ENCODE measurements at regions of chr15 and their contacts with region 1.

Region 1: DNA sequence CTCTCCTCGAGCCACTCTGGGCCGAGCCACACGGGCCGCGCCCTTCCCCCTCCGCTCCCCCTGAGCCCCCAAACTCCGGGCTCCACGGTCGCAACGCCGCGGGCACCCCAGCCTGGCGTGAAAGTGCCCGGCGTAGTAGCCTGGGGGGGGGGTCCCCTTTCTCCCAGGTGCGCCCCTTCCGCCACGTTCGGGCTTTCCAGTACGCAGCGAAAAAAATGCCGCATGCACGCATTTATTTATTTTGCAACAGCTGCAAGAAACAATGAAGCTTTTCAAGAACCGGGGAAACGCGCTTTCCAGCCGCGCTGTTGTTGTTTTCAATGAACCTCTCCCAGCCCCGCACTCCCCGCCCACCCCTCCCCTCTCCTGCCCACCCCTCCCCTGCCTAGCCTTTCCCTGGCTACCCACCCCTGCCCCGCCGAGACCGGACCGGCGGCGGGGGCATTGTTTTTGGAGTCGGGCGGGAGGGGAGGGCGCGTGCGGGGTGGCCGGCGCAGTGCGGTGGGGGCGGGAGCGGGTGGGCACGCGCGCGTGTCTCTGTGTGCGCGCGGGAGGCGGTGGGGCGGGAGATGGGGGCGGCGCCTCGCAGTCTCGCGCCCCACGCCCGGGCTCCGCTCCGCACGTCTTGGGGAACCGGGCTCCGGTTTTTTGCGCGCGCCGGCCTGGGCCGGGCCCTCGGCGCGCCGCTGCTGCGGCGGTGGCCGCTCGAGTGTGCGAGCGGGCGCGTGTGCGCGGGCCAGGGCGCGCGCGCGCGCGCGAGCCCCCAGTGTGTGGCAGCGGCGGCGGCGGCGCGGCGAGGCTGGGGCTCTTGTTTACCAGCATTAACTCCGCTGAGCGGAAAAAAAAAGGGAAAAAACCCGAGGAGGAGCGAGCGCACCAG is at the start of gene IGF1R:
- H3K4me3 ChIP-seq: peak within 1 kb of the TSS; percentile 91
- H3K27ac ChIP-seq: peak within 1 kb of the TSS; percentile 96
- H3K4me1 ChIP-seq: peaks cover 14% of the 10 kb centered on the region
- CTCF ChIP-seq: no peak

Region 2: DNA sequence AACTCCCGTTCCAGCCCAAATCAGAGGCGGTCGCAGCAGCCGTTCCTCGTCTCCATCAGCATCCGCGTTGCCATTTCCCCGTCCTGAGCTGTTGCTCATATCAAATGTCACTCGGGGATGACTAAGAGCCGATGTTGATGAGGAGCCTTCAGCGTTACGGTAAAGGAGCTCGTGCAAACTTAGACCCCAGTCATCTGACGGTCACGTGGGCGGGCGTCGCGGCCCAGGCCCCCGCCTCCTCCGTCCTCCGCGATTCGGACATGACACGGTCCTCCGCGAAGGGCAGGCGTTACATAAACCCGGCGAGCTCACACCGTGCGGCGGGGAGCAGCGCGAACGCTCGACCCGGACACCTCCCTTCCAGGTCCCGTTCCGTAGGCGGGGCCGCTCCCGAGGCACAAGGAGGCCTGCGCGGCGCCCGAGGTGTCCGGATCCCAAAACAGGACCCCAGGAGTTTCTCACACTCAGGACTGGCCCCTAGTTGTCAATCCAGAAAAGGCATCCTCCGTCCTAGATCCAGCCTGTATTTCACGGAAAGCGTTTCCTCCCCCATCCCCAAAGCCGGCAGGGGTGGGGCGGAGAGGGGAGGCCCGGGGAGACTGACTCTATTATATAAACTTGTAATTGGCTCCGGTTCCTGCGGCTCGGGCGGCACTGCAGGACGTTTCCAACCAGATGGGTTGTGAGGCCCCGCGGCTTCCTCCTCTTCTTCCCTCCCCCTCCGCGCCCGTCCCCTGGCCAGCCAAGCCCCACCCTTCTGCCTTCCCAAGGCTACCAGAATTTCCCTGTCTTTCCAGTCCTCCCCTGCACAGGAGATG is 99.7 kb before region 1 on chr15:
- CTCF ChIA-PET with region 1: interaction called, 3 read pairs
- POLR2A ChIA-PET with region 1: interaction called, 16 read pairs
- H3K4me3 ChIP-seq: peak overlapping the region; percentile 59
- H3K27ac ChIP-seq: peak overlapping the region; percentile 78
- H3K4me1 ChIP-seq: peaks cover 9% of the 10 kb centered on the region
- CTCF ChIP-seq: peak; percentile 63; the same call in 1 of the 2 replicates

Region 3: GRCh38 chr15:98610991-98611390 is 37.0 kb before region 1 on chr15:
- CTCF ChIA-PET with region 1: no interaction called
- POLR2A ChIA-PET with region 1: no interaction called
- H3K4me3 ChIP-seq: no peak overlapping the region
- H3K27ac ChIP-seq: no peak overlapping the region
- H3K4me1 ChIP-seq: no peaks in the 10 kb centered on the region
- CTCF ChIP-seq: no peak

Region 4: DNA sequence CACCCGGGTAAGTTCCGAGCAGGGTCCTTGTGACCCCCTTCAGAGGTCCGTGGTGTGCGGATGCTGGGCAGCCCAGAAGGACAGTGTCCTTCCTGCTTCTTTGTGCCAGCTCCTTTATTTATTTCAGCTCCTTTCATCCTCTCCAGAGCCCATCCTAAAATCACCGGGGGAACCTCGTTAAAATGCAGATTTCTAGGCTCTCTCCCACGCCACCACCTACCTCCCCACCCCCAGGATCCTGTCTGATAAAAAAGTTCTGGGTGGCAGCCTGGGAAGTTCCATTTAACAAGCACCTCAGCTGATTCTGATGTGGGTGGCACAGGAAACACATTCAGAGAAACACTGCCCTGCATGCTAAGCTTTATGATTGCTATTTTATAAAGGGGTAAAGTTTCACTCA is 12.2 kb before region 1 on chr15:
- CTCF ChIA-PET with region 1: interaction called, 10 read pairs
- POLR2A ChIA-PET with region 1: interaction called, 6 read pairs
- H3K4me3 ChIP-seq: no peak overlapping the region
- H3K27ac ChIP-seq: no peak overlapping the region
- H3K4me1 ChIP-seq: no peaks in the 10 kb centered on the region; the same call in 1 of the 2 replicates
- CTCF ChIP-seq: no peak

Region 5: GRCh38 chr15:98658831-98659699 is 11.1 kb after region 1 on chr15:
- CTCF ChIA-PET with region 1: interaction called, 31 read pairs
- POLR2A ChIA-PET with region 1: interaction called, 3 read pairs
- H3K4me3 ChIP-seq: no peak overlapping the region
- H3K27ac ChIP-seq: no peak overlapping the region
- H3K4me1 ChIP-seq: peaks cover 24% of the 10 kb centered on the region
- CTCF ChIP-seq: peak; percentile 42; the same call in 1 of the 2 replicates

Region 6: GRCh38 chr15:98850961-98851573 is 203.1 kb after region 1 on chr15:
- CTCF ChIA-PET with region 1: interaction called, 17 read pairs
- POLR2A ChIA-PET with region 1: interaction called, 4 read pairs
- H3K4me3 ChIP-seq: no peak overlapping the region
- H3K27ac ChIP-seq: peak overlapping the region; percentile 0; the same call in 1 of the 2 replicates
- H3K4me1 ChIP-seq: peaks cover 37% of the 10 kb centered on the region
- CTCF ChIP-seq: peak; percentile 89

Measured in HEK293 (cell line).